ENCODE measurements at regions of chr2 and their contacts with region 1.

Region 1: DNA sequence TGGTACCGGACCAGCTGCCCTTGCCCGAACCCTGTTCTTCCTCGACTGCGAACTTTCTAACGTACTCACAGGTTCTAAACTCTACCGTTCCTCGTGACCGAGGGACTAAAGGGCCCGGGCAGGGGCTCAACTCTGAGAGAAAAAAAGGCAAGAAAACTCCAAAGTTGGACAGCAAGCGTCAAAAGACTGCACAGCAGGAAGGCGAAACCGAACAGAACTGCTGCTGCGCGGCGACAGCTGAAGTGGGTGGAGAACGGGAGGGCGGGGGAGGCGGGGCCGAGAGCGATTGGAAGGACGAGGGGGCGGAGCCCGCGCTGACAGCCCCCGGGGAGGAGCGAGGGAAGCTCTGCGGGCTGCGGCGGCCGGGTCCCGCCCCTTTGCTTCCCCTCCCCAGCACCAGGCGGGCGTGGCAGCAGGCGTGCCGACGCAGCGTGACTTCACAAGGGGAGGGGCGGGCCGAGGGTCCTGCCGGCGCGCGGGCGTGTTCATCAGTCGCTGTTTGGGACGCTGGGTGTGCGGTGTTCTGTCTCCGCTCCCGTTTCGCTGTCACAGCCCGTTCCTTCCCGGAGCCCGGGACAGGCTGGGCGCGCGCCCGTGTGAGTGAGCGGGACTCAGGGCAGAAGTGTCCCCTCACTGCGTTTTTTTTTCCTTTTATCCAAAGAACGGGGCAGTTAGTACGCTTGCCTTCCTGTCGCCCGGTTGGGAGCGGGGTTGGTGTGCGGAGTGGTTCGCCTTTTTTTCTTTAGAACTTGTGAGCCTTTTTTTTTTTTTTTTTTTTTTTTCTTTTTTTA is at the start of gene NABP1:
- DNase-seq: peak; percentile 97
- H3K4me3 Mint-ChIP-seq: peak within 1 kb of the TSS; percentile 84
- H3K27ac Mint-ChIP-seq: peak within 1 kb of the TSS; percentile 92
- H3K4me1 Mint-ChIP-seq: peaks cover 22% of the 10 kb centered on the region
- H3K27me3 Mint-ChIP-seq: no peaks in the 10 kb centered on the region
- CTCF ChIP-seq: no peak
- total RNA-seq, gene NABP1: 81.8 and 96.3 TPM in 2 replicates

Region 2: GRCh38 chr2:191582355-191582754 is 95.5 kb before region 1 on chr2:
- CTCF ChIA-PET with region 1: no interaction called
- POLR2A ChIA-PET with region 1: interaction called, 48 read pairs
- intact Hi-C with region 1: no loop called
- DNase-seq: peak; percentile 85
- H3K4me3 Mint-ChIP-seq: no peak overlapping the region
- H3K27ac Mint-ChIP-seq: peak overlapping the region; percentile 33
- H3K4me1 Mint-ChIP-seq: peaks cover 18% of the 10 kb centered on the region
- H3K27me3 Mint-ChIP-seq: no peaks in the 10 kb centered on the region
- CTCF ChIP-seq: no peak

Region 3: GRCh38 chr2:191620145-191620544 is 57.7 kb before region 1 on chr2:
- CTCF ChIA-PET with region 1: interaction called, 3 read pairs
- POLR2A ChIA-PET with region 1: interaction called, 23 read pairs
- intact Hi-C with region 1: no loop called
- DNase-seq: peak; percentile 31
- H3K4me3 Mint-ChIP-seq: no peak overlapping the region
- H3K27ac Mint-ChIP-seq: peak overlapping the region; percentile 79
- H3K4me1 Mint-ChIP-seq: peaks cover 37% of the 10 kb centered on the region
- H3K27me3 Mint-ChIP-seq: no peaks in the 10 kb centered on the region
- CTCF ChIP-seq: no peak

Region 4: DNA sequence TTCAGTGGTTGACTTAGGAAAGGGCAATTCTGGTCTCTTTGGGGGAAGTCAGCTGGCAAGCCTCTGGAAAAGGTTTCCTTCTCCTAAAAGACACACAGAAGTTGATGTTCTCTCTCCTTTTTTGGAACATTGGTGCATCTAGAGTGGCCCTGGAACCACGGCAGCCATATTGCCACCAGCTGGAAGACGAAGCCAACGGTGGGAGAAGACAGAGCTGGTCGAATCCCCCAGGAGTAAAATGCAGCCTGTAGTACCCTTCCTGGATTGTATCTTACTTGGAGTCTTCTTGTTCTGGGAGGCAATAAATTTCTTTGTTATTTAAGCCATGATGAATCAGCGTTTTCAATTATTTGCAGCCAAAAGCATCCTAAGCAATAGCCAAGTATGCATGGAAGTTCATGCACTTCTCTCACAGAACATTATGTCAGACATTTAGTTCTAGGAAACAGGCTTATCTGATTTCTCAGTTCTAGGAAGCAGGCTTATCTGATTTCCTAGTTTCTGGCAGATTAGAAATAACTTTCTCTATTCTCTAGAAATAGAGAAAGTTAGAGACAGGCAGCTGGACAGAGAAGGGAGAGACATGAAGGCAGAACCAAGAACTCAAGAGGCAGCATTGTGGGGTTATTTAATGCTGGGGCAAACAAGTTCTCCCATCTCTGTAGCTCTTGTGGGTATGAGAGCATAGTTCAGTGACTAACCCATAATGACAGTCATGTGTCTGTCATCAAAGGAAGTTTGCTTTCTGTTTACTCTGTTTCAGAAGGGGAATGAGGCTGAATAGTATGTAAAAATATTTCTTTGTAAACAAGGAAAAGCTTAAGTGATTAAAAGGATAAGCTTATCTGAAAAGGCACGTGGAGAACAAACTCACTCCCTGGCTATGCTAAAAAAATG is 40.4 kb before region 1 on chr2:
- CTCF ChIA-PET with region 1: interaction called, 3 read pairs
- POLR2A ChIA-PET with region 1: interaction called, 55 read pairs
- intact Hi-C with region 1: no loop called
- DNase-seq: peak; percentile 36
- H3K4me3 Mint-ChIP-seq: no peak overlapping the region
- H3K27ac Mint-ChIP-seq: peak overlapping the region; percentile 61
- H3K4me1 Mint-ChIP-seq: peaks cover 30% of the 10 kb centered on the region
- H3K27me3 Mint-ChIP-seq: no peaks in the 10 kb centered on the region
- CTCF ChIP-seq: no peak

Region 5: DNA sequence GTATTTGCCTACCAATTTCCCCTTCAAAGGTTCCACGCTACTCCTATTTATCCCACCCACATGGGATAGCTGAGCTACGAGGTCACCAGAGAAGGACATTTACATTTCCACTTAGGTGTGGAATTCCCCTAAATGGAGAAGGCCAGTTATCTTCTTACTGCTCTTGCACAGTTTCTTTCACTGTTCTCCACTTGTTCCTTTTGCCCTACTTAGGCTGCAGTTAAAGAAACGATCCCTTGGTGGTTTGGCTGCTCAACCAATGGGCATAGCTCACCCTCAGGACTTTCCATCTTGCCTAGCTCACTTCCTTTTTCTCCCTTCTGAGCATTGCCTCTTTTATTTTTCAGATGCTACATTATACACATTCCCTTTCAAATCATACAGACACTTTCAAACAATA is 11.1 kb before region 1 on chr2:
- CTCF ChIA-PET with region 1: interaction called, 3 read pairs
- POLR2A ChIA-PET with region 1: interaction called, 56 read pairs
- intact Hi-C with region 1: no loop called
- DNase-seq: no peak
- H3K4me3 Mint-ChIP-seq: no peak overlapping the region
- H3K27ac Mint-ChIP-seq: no peak overlapping the region
- H3K4me1 Mint-ChIP-seq: peaks cover 8% of the 10 kb centered on the region
- H3K27me3 Mint-ChIP-seq: no peaks in the 10 kb centered on the region
- CTCF ChIP-seq: no peak

Region 6: DNA sequence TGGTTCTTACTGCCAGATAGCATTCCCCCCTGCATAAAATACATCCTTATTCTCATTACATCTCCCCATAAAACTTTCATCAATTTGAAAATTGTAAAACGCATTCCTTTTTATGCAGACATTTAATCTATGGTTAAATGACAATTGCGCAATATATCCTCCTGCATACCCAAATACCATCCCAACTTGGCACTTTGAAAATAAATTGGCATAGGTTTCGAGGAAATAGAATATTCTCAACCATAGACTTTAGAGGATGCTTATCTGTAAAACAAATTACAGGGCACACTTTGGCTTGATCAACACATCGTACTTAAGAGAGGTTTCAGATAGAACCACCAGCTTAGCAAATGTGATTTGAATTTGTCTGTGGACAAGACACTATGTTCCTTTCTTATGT is 200.0 kb after region 1 on chr2:
- CTCF ChIA-PET with region 1: no interaction called
- POLR2A ChIA-PET with region 1: no interaction called
- intact Hi-C with region 1: no loop called
- DNase-seq: no peak
- H3K4me3 Mint-ChIP-seq: no peak overlapping the region
- H3K27ac Mint-ChIP-seq: peak overlapping the region; percentile 68
- H3K4me1 Mint-ChIP-seq: peaks cover 22% of the 10 kb centered on the region
- H3K27me3 Mint-ChIP-seq: no peaks in the 10 kb centered on the region
- CTCF ChIP-seq: no peak

Measured in MCF 10A (cell line).